ENCODE measurements at regions of chr6 and their contacts with region 1.

Region 1: GRCh38 chr6:35297601-35298481 is at the start of gene DEF6:
- DNase-seq: peak; percentile 91
- H3K4me3 Mint-ChIP-seq: peak within 1 kb of the TSS; percentile 69
- H3K27ac Mint-ChIP-seq: peak within 1 kb of the TSS; percentile 23
- H3K4me1 Mint-ChIP-seq: peaks cover 14% of the 10 kb centered on the region
- H3K27me3 Mint-ChIP-seq: no peaks in the 10 kb centered on the region
- CTCF ChIP-seq: peak; percentile 85
- total RNA-seq, gene DEF6: 17.8 and 23.1 TPM in 2 replicates

Region 2: DNA sequence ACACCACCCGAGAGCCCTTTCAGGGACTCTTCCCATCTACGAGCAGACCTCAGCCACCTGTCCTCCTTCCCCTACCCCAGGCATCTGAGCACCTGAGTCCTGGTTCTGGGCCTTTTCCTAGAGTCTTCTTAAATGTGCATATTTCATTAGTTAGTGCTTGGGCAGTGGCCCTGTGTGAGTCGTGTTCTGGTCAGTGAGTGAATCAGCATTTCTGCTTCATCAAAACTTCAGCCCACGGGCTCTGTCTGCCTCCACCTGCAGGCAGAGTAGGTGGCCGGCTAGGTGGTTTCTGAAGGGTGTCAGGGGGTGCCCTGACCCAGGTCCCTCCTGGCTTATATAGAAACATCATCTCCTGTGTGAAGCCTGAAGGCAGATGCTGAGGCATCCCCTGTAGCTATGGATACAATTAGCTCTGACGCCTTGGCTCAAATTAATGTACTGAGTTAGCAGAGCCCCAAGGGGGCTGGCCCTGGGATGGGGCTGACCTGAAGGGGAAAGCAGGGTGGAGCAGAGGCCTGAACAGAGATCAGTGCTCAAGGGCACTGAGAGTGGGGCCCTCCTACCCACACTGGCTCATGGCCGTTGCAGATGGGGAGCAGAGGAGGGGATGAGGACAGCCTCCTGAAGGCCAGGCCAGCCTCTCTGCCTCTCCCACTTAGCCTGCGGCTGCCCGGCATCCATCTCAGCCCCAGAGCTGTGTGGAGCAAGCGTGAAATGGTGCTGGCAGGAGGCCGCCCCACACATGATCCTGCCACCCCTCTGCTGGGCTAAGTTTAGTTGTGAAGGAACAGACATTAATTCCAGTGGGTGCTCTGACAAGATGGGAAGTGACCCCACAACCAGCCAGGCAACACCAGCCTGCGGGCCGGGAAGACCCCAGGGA is 1564.8 kb before region 1 on chr6:
- CTCF ChIA-PET with region 1: no interaction called
- POLR2A ChIA-PET with region 1: no interaction called
- intact Hi-C with region 1: no loop called
- DNase-seq: no peak
- H3K4me3 Mint-ChIP-seq: no peak overlapping the region
- H3K27ac Mint-ChIP-seq: no peak overlapping the region
- H3K4me1 Mint-ChIP-seq: no peaks in the 10 kb centered on the region
- H3K27me3 Mint-ChIP-seq: no peaks in the 10 kb centered on the region
- CTCF ChIP-seq: no peak

Region 3: GRCh38 chr6:35287671-35288396 is 10.0 kb before region 1 on chr6:
- CTCF ChIA-PET with region 1: interaction called, 14 read pairs
- POLR2A ChIA-PET with region 1: no interaction called
- intact Hi-C with region 1: no loop called
- DNase-seq: no peak
- H3K4me3 Mint-ChIP-seq: no peak overlapping the region
- H3K27ac Mint-ChIP-seq: no peak overlapping the region
- H3K4me1 Mint-ChIP-seq: no peaks in the 10 kb centered on the region
- H3K27me3 Mint-ChIP-seq: no peaks in the 10 kb centered on the region
- CTCF ChIP-seq: no peak

Region 4: GRCh38 chr6:35327349-35328027 is 29.6 kb after region 1 on chr6:
- CTCF ChIA-PET with region 1: interaction called, 33 read pairs
- POLR2A ChIA-PET with region 1: interaction called, 3 read pairs
- intact Hi-C with region 1: loop called (anchors 1 kb)
- DNase-seq: peak; percentile 62
- H3K4me3 Mint-ChIP-seq: no peak overlapping the region
- H3K27ac Mint-ChIP-seq: no peak overlapping the region
- H3K4me1 Mint-ChIP-seq: no peaks in the 10 kb centered on the region
- H3K27me3 Mint-ChIP-seq: no peaks in the 10 kb centered on the region
- CTCF ChIP-seq: peak; percentile 36

Region 5: GRCh38 chr6:35391240-35391968 is 93.6 kb after region 1 on chr6:
- CTCF ChIA-PET with region 1: no interaction called
- POLR2A ChIA-PET with region 1: no interaction called
- intact Hi-C with region 1: no loop called
- DNase-seq: peak; percentile 79
- H3K4me3 Mint-ChIP-seq: no peak overlapping the region
- H3K27ac Mint-ChIP-seq: peak overlapping the region; percentile 81
- H3K4me1 Mint-ChIP-seq: peaks cover 28% of the 10 kb centered on the region
- H3K27me3 Mint-ChIP-seq: no peaks in the 10 kb centered on the region
- CTCF ChIP-seq: peak; percentile 22

Region 6: GRCh38 chr6:35452186-35453090 is 154.6 kb after region 1 on chr6 and contains the start of gene FANCE:
- CTCF ChIA-PET with region 1: interaction called, 40 read pairs
- POLR2A ChIA-PET with region 1: interaction called, 31 read pairs
- intact Hi-C with region 1: loop called (anchors 1 kb)
- DNase-seq: peak; percentile 92
- H3K4me3 Mint-ChIP-seq: peak within 1 kb of the TSS; percentile 74
- H3K27ac Mint-ChIP-seq: no peak within 1 kb of the TSS
- H3K4me1 Mint-ChIP-seq: peaks cover 26% of the 10 kb centered on the region
- H3K27me3 Mint-ChIP-seq: no peaks in the 10 kb centered on the region
- CTCF ChIP-seq: no peak
- total RNA-seq, gene FANCE: 12.3 and 13.3 TPM in 2 replicates

Region 7: GRCh38 chr6:35583893-35584688 is 286.2 kb after region 1 on chr6:
- CTCF ChIA-PET with region 1: no interaction called
- POLR2A ChIA-PET with region 1: no interaction called
- intact Hi-C with region 1: loop called (anchors 10 kb)
- DNase-seq: peak; percentile 82
- H3K4me3 Mint-ChIP-seq: no peak overlapping the region
- H3K27ac Mint-ChIP-seq: peak overlapping the region; percentile 75
- H3K4me1 Mint-ChIP-seq: peaks cover 40% of the 10 kb centered on the region
- H3K27me3 Mint-ChIP-seq: no peaks in the 10 kb centered on the region
- CTCF ChIP-seq: peak; percentile 65